ENCODE measurements at regions of chr1 and their contacts with region 1.

Region 1: DNA sequence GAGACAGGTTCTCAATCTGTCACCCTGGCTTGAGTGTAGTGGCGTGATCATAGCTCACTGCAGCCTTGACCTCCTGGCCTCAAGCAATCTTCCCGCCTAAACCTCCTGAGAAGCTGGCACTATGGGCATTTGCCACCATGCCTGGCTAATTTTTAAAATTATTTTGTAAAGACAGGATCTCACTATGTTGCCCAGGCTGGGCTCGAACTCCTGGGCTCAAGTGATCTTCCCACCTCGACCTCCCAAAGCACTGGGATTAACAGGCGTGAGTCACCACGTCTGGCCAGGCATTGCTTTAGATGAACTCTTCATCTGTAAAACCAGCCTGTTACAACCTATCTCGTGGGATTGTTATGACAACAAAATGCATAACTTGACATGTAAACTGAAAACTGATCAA is 2.4 kb downstream of the COA6 start:
- DNase-seq: no peak
- H3K4me3 ChIP-seq: no peak overlapping the region
- H3K27ac ChIP-seq: no peak overlapping the region
- H3K4me1 ChIP-seq: peaks cover 13 to 18% of the 10 kb centered on the region in 2 donors
- H3K27me3 ChIP-seq: no peaks in the 10 kb centered on the region
- CTCF ChIP-seq: no peak
- POLR2A ChIP-seq: no peak

Region 2: DNA sequence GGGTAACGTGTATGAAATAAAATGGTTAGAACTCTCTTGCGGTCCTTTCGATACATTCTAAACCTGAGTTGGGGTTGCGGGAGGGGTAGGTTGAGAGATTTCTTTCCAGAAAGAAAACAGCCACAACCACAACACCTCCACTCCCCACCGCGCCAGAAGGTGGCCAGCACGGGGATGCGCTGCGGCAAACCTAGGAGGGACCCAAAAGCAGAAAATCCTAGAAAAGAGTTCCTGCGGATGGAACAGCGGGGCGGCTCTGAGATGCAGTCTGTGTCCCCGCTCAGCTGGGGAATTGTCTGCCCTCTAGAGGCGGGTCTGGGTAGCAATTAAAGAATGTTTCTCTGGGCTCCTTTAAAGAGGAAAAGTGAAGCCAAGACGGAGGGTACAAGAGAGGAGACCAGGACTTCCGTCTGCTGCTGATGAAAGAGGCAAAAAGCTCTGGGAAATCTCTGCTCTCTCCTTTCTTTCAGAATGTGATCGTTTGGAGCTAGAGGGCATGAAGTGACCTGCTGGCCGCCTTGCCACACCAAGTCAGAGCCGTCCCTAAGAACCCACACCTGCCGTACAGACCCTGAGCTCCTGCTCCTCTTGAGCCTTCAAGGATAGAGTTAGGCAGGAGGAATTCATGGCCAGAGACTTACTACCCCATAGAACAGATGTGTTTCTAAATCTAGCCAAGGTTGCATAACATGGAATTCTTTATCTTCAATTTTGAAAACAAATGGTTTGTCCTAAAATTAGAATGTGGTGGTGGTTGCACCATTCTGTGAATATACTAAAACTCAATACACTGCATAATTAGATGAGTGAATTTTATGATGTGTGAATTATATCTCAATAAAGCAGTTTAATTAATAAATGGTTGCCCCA is 48.9 kb before region 1 on chr1:
- intact Hi-C with region 1: no loop called
- DNase-seq: peak; percentile 30 to 69 (median 51)
- H3K4me3 ChIP-seq: peak overlapping the region in 1 of 4 donors; percentile 7
- H3K27ac ChIP-seq: no peak overlapping the region
- H3K4me1 ChIP-seq: no peaks in the 10 kb centered on the region
- H3K27me3 ChIP-seq: no peaks in the 10 kb centered on the region
- CTCF ChIP-seq: peak; percentile 40 to 71 (median 62)
- POLR2A ChIP-seq: no peak

Region 3: GRCh38 chr1:234473118-234473517 is 97.4 kb after region 1 on chr1:
- intact Hi-C with region 1: loop called in 1 of 2 experiments (anchors 5 kb)
- DNase-seq: no peak
- H3K4me3 ChIP-seq: no peak overlapping the region
- H3K27ac ChIP-seq: no peak overlapping the region
- H3K4me1 ChIP-seq: peaks cover 0 to 20% of the 10 kb centered on the region in 2 donors
- H3K27me3 ChIP-seq: no peaks in the 10 kb centered on the region
- CTCF ChIP-seq: no peak
- POLR2A ChIP-seq: no peak

Region 4: DNA sequence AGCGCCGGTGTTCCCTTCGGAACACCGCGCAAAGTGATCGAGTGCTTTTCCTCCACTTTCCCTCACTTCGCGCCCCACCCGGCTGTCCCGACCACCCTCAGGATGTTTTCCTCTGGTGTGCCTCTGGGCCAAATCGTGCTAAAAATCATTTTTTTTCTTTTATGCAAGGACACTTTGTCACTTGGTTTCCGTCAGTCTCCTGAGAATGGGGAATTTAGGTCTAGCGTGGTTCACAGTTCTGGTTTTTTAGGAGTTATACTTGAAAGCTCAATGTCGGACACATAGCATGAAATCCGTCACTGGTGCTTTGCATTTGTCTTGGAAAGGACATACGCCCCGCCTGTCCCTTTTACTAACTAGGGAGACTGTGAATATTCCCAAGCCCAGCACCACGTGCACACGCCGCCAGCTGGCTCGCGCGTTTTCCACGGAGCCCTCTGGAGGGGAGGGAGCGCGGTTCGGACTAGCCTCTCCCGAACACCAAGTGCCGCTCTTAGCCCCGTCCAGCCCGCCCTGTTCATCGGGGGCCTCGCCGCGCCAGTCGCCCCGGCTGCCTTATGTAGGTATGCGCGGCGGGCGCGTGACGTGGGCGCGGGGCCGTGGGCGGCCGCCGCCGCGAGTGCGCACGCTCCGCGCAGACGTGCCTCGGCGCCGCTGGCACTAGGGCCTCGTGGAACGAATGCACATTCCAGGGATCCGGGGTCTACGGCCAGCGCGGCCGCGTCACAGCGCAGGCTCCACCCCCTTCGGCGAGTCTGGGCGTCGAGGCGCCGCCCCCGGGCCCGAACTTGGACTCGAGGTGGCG is 234.9 kb after region 1 on chr1:
- intact Hi-C with region 1: no loop called
- DNase-seq: peak; percentile 96 to 98 (median 96)
- H3K4me3 ChIP-seq: peak overlapping the region; percentile 31 to 88 (median 55)
- H3K27ac ChIP-seq: peak overlapping the region; percentile 97 to 100 (median 100)
- H3K4me1 ChIP-seq: peaks cover 45% of the 10 kb centered on the region in 2 donors
- H3K27me3 ChIP-seq: no peaks in the 10 kb centered on the region
- CTCF ChIP-seq: peak in 3 of 6 experiments; percentile 21 to 41 (median 40)
- POLR2A ChIP-seq: peak; percentile 99